Activated CD8-positive, alpha-beta memory T cell treated with anti-CD3 and anti-CD28 coated beads, Interleukin-2, amount 10 ng/mL, durations not matched to agents 7 days and 5 days (primary cell): ENCODE measurements at regions of chr17 and their contacts with region 1.

Region 1: DNA sequence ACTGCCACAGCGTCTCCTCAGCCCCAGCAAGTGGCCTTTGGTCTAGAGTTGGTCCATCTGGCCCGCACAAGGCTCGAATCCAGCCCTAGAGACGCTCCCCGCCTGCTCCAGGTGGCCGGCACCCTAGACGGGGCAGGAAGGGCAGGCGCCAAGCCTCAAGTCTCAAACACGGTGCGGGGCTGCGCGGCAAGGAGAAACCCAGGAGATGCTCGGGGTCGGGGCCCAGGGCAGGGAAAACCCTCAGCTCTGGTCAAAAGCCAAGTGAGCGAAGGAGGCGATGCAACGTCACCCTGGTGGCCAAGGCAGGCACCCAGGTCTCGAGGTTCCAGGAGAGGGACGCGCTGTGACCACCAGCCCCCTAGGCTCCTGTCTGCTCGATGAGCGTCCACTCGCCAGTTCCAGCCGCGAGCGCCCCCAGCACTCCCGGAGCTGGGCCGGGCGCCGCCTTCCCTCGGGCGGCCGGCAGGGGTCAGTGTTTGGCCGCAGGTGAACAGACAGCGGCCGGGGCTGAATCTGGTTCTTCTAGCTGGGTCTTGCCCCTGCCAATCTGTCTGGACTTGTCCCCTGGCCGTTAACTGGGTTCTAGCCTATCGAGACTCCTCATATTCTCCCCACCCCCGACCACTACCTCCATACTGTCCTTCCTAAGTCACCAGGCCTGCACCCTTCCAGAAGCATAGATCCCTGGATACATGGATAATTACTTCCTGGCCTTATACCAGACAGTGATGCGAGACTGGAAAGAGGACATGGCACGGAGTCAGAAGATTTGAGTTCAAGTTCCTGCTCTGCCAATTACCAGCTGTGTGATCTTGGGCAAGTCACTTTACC is 44.0 kb downstream of the PRAC1 start:
- DNase-seq: peak; percentile 78
- ATAC-seq: peak; percentile 98
- H3K4me3 Mint-ChIP-seq: no peak overlapping the region
- H3K27ac Mint-ChIP-seq: no peak overlapping the region
- H3K4me1 Mint-ChIP-seq: peaks cover 13% of the 10 kb centered on the region
- H3K27me3 Mint-ChIP-seq: peaks cover 59% of the 10 kb centered on the region

Region 2: GRCh38 chr17:48663134-48663924 is 15.0 kb before region 1 on chr17:
- CTCF ChIA-PET with region 1: interaction called, 15 read pairs
- DNase-seq: no peak
- ATAC-seq: no peak
- H3K4me3 Mint-ChIP-seq: no peak overlapping the region
- H3K27ac Mint-ChIP-seq: no peak overlapping the region
- H3K4me1 Mint-ChIP-seq: no peaks in the 10 kb centered on the region
- H3K27me3 Mint-ChIP-seq: peaks cover 28% of the 10 kb centered on the region

Region 3: DNA sequence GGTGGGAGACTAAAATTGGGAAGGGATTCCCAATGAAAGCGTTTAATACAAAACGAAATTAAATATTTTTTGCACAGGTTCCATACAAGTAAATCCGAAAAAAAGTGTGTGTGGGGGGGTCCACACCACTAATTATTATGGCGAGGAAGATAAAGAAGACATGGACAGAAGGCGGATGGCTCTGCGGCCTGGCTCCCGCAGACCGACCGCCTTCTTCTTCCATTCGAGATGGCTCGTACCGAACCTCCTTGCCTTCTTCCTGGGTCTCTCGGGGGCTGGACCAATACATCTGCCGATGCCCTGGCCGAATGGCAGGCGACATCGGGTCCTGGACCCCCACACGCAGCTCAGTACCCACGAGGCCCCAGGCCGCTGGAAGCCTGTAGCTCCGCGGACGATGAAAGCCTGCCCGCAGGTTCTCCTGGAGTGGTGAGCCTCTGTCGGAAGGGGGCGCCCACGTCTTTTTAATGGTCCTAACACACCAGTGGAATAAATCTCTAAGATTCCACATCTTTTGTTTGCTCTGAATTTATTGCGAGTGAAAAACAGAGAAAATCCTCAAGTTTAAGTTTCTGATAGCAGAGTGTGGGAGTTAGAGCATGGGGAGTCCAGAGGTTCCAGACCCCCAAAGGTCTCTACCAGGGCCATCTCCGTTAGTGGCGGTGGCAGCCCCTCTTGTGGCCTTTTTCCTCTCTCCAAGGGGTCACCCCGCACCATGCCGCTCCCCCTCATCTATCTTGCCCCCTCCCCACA is 46.1 kb after region 1 on chr17:
- CTCF ChIA-PET with region 1: interaction called, 31 read pairs
- DNase-seq: peak; percentile 87
- ATAC-seq: peak; percentile 75
- H3K4me3 Mint-ChIP-seq: peak overlapping the region; percentile 12
- H3K27ac Mint-ChIP-seq: peak overlapping the region; percentile 77
- H3K4me1 Mint-ChIP-seq: peaks cover 25% of the 10 kb centered on the region
- H3K27me3 Mint-ChIP-seq: peaks cover 96% of the 10 kb centered on the region

Region 4: DNA sequence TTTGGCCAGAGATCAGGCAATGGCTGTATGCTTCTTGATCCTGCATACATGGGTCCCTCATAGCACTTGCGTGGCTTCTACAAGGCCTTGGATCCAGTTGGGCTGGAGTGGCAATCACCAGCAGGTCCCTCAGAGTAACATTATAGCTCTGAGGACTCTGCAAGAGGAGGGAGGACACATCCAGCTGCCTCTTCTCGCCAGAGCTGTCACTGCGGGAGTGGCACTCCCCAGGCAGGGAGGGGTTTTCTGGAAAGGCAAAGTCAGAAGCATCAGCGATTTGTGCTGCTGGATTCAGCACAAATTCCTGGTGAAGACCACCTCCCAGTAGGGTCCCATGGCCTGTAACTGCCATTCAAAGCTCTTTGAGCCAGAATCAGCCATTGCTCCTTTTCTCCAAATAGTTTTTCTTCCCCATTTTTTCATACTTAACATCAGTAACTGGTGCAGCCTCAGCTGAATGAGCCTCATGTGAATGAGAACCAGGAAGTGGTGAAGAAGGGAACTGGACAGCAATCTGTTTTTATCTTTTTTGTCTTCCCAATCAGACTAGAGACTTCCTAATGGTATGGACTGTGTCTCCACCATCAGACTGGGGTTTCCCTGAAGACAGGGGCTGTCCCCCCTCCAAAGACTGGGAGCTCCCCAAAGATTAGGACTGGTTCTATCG is 90.8 kb after region 1 on chr17:
- CTCF ChIA-PET with region 1: interaction called, 10 read pairs
- DNase-seq: no peak
- ATAC-seq: no peak
- H3K4me3 Mint-ChIP-seq: no peak overlapping the region
- H3K27ac Mint-ChIP-seq: no peak overlapping the region
- H3K4me1 Mint-ChIP-seq: peaks cover 8% of the 10 kb centered on the region
- H3K27me3 Mint-ChIP-seq: peaks cover 55% of the 10 kb centered on the region

Region 5: DNA sequence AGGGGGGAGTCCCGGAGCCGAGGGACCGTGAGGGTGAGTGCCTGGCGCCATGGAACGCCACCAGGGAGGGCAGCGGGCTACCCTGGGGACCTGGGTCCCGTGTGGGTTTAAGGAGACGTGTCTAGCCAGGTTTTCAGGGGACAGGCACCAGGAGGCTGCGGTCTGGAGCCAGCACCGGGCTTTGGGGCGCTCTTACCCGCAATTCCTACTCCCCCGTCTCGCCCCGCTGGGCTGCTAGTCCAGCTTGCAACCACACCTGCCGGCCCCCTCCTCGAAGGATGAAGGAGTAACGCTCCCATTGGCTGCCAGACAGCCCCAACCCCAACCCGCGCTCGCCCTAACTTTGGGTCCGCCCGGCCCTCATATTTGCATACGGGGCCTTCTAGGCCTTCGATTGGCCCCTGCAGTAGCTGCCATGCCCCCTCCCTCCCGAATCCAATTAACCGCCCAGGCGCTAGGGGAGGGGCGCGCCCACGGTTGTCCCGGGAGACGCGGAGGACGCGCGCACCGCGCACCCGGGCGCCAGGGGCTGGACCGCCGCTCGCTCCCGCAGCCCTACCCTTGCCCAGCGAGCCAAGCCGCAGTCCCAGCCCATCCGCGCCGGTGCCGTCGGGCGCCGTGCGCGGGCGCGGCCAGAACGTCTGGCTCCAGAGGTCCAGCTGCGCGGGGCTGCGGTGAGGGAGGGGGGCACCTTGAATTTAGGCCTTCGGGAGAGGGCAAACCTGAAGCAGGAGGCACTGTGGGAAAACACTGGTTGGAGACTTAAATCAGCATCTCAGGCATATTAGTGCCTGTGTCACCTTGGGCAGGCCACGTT is 138.6 kb after region 1 on chr17 and contains the start of gene TTLL6:
- CTCF ChIA-PET with region 1: interaction called, 10 read pairs
- DNase-seq: peak; percentile 84
- ATAC-seq: peak; percentile 98
- H3K4me3 Mint-ChIP-seq: peak within 1 kb of the TSS; percentile 61
- H3K27ac Mint-ChIP-seq: no peak within 1 kb of the TSS
- H3K4me1 Mint-ChIP-seq: peaks cover 24% of the 10 kb centered on the region
- H3K27me3 Mint-ChIP-seq: peaks cover 62% of the 10 kb centered on the region
- total RNA-seq, gene TTLL6: not detected

Region 6: GRCh38 chr17:48850792-48851323 is 172.5 kb after region 1 on chr17:
- CTCF ChIA-PET with region 1: no interaction called
- DNase-seq: no peak
- ATAC-seq: peak; percentile 85
- H3K4me3 Mint-ChIP-seq: peak overlapping the region; percentile 5
- H3K27ac Mint-ChIP-seq: peak overlapping the region; percentile 76
- H3K4me1 Mint-ChIP-seq: peaks cover 19% of the 10 kb centered on the region
- H3K27me3 Mint-ChIP-seq: no peaks in the 10 kb centered on the region

Region 7: DNA sequence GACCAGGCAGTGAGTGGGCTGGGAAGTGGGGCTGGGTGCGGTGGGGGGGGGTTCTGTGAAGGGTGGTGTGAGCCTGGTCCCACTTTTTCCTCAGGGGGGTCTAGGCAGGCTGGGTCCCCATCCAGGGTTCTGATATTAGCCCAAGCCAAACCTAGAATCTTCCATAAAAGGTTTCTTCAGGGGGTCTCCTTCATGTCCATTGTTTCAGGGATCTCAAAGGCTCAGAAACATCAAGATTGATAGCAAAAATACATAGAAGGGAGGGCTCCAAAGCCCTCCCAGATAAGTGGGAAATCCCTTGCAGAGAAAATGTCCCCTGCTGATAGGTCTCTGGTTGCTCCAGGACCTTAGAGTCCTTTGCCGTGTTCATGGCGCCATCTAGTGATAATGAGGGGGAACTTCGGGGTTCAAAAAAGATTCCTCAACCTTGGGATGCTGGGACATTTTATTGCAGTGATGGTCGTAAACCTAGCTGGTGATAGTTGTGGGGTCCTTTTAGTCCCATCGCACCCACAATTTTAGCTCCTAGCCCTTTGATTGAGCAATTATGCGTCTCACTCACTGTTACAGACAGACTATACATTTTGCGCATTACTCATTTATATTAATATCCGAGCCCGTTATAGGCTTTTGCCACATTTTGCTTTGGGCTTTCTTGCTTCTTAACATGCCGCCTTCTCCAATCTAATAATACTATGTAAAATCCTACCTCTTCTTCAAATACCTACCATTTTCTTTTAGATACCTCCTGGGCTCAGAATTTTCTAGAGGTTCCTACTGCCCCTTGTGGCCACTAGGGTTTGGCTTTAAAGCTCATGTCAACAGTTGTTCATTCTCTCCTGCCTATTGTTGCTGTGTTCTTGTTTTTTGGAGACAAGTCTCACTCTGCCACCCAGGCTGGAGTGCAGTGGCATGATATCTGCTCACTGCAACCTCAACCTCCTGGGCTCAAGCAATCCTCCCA is 353.9 kb after region 1 on chr17:
- CTCF ChIA-PET with region 1: interaction called, 26 read pairs
- DNase-seq: peak; percentile 65
- ATAC-seq: peak; percentile 79
- H3K4me3 Mint-ChIP-seq: no peak overlapping the region
- H3K27ac Mint-ChIP-seq: no peak overlapping the region
- H3K4me1 Mint-ChIP-seq: peaks cover 6% of the 10 kb centered on the region
- H3K27me3 Mint-ChIP-seq: no peaks in the 10 kb centered on the region